Activated CD8-positive, alpha-beta T cell treated with anti-CD3 and anti-CD28 coated beads for 36 hours (primary cell): ENCODE measurements at regions of chr1 and their contacts with region 1.

Region 1: GRCh38 chr1:26602378-26602959 is 72.9 kb downstream of the RPS6KA1 start:
- DNase-seq: peak; percentile 52
- ATAC-seq: peak; percentile 71
- H3K4me3 Mint-ChIP-seq: no peak overlapping the region
- H3K27ac Mint-ChIP-seq: no peak overlapping the region
- H3K4me1 Mint-ChIP-seq: peaks cover 17% of the 10 kb centered on the region
- H3K27me3 Mint-ChIP-seq: no peaks in the 10 kb centered on the region
- CTCF ChIP-seq: peak; percentile 100

Region 2: DNA sequence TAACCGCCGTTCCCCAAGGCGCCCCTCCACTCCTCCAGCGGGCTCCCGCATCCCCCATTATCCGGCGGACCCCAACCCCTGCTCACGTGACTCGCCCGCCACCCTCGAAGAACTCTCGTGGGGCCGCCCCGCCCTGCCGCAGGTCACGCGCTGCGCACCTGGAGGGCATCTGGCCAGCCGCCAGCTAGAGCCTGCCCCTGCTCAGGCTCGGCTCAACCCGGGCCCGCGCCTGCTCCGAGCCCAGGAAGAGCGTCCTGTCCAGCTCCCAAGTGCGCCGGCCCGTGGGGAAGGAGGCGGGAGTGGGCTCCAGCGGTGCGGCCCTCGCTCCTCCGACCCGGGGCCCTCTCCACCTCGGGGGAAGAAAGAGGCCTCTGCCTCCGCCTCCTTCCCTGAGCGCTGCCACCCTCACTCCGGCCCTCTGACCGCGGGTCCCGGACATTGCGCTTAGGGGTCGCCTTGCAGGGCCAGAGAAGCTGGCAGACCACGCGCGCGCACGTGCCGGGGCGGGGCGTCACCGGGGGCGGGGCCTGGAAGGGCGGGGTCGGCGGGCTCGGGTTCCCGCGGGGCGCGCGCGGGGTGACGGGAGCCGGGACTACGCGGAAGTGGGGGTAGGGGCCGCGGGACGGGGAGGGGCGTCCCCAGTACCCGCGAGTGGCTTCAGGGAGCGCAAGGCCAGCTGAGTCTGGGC is 101.8 kb before region 1 on chr1:
- CTCF ChIA-PET with region 1: interaction called, 11 read pairs
- POLR2A ChIA-PET with region 1: no interaction called
- intact Hi-C with region 1: no loop called
- DNase-seq: peak; percentile 91
- ATAC-seq: peak; percentile 78
- H3K4me3 Mint-ChIP-seq: peak overlapping the region; percentile 90
- H3K27ac Mint-ChIP-seq: peak overlapping the region; percentile 94
- H3K4me1 Mint-ChIP-seq: peaks cover 17% of the 10 kb centered on the region
- H3K27me3 Mint-ChIP-seq: no peaks in the 10 kb centered on the region
- CTCF ChIP-seq: peak; percentile 53

Region 3: GRCh38 chr1:26677306-26678115 is 75.0 kb after region 1 on chr1:
- CTCF ChIA-PET with region 1: interaction called, 45 read pairs
- POLR2A ChIA-PET with region 1: no interaction called
- intact Hi-C with region 1: no loop called
- DNase-seq: peak; percentile 75
- ATAC-seq: peak; percentile 100
- H3K4me3 Mint-ChIP-seq: peak overlapping the region; percentile 20
- H3K27ac Mint-ChIP-seq: peak overlapping the region; percentile 32
- H3K4me1 Mint-ChIP-seq: peaks cover 18% of the 10 kb centered on the region
- H3K27me3 Mint-ChIP-seq: no peaks in the 10 kb centered on the region
- CTCF ChIP-seq: peak; percentile 52

Region 4: GRCh38 chr1:26744075-26744959 is 141.8 kb after region 1 on chr1:
- CTCF ChIA-PET with region 1: interaction called, 17 read pairs
- POLR2A ChIA-PET with region 1: no interaction called
- intact Hi-C with region 1: no loop called
- DNase-seq: peak; percentile 92
- ATAC-seq: peak; percentile 95
- H3K4me3 Mint-ChIP-seq: peak overlapping the region; percentile 58
- H3K27ac Mint-ChIP-seq: peak overlapping the region; percentile 86
- H3K4me1 Mint-ChIP-seq: peaks cover 83% of the 10 kb centered on the region
- H3K27me3 Mint-ChIP-seq: no peaks in the 10 kb centered on the region
- CTCF ChIP-seq: no peak

Region 5: DNA sequence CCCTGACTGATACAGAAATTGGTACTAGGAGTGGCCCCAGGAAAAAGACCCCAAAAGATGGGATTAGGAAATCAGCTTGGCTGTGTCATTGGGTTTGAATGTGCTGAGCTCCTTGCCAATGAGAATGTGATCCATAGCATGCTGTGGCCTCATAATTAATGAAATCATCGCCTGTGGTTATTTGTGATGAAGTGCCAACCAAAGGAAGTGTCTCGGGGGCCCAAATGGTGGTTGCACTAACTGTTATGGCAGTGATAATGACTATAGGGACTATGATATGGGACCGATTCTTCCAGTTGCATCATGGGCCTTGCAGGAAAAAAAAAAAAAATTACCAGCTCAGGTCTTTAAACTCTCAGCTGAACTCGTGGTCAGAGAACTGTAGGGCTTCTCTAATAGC is 208.6 kb after region 1 on chr1:
- CTCF ChIA-PET with region 1: interaction called, 46 read pairs
- POLR2A ChIA-PET with region 1: interaction called, 4 read pairs
- intact Hi-C with region 1: no loop called
- DNase-seq: peak; percentile 37
- ATAC-seq: no peak
- H3K4me3 Mint-ChIP-seq: no peak overlapping the region
- H3K27ac Mint-ChIP-seq: peak overlapping the region; percentile 55
- H3K4me1 Mint-ChIP-seq: peaks cover 22% of the 10 kb centered on the region
- H3K27me3 Mint-ChIP-seq: no peaks in the 10 kb centered on the region
- CTCF ChIP-seq: no peak

Region 6: GRCh38 chr1:26874896-26875295 is 272.4 kb after region 1 on chr1:
- CTCF ChIA-PET with region 1: interaction called, 19 read pairs
- POLR2A ChIA-PET with region 1: interaction called, 3 read pairs
- intact Hi-C with region 1: loop called (anchors 5 kb)
- DNase-seq: no peak
- ATAC-seq: no peak
- H3K4me3 Mint-ChIP-seq: no peak overlapping the region
- H3K27ac Mint-ChIP-seq: no peak overlapping the region
- H3K4me1 Mint-ChIP-seq: peaks cover 2% of the 10 kb centered on the region
- H3K27me3 Mint-ChIP-seq: no peaks in the 10 kb centered on the region
- CTCF ChIP-seq: no peak